ENCODE measurements at regions of chr1 and their contacts with region 1.

Region 1: DNA sequence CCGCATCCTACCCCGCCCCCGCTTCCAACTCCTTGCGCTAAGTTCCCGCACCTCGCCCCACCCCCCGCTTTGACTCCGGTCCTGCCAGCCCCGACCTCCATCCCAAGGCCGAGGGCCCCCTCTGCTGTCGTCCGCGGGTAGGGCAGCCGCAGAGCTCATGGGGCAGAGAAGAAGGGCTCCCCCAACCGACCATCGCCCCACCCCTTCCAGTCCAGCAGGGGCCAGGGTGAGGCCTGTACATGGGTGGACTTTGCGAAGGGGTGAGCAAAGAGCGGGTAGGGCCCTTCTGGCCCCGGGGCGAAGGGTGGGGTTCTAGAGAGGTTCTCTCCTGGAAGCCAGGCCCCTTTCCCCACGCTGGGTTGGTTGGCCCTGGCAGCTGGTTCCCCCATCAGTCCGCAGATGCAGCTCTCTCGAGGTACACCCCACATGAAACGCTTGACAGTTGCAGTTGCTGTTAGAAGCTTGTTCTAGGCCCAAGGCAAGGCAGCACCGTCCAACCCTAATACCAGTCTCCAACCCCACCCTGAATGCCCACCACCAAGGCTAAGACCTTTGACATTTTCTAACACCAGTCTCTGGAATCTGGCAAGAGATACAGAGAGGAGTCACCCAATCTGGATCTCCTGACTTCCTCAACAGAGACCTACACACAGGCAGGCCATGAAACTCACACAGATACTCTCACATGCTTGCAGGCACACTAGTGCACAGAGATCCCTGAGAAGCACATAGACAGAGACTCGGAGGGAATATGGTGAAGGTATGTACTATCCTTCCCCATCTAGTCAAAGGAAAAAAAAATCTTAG is 25.3 kb upstream of the ADGRB2 start:
- DNase-seq: peak; percentile 92 to 95
- H3K4me3 ChIP-seq: peak overlapping the region; percentile 54
- H3K4me3 Mint-ChIP-seq: peak overlapping the region; percentile 74
- H3K27ac Mint-ChIP-seq: peak overlapping the region; percentile 90
- H3K4me1 ChIP-seq: 0 out of 2 replicates have a peak, but pooled peaks cover 7% of the 10 kb centered on the region
- H3K4me1 Mint-ChIP-seq: no peaks in the 10 kb centered on the region
- H3K27me3 ChIP-seq: no peaks in the 10 kb centered on the region
- H3K27me3 Mint-ChIP-seq: no peaks in the 10 kb centered on the region
- CTCF ChIP-seq: peak; percentile 72 to 90

Region 2: GRCh38 chr1:31564134-31564989 is 225.1 kb before region 1 on chr1:
- CTCF ChIA-PET with region 1: no interaction called
- POLR2A ChIA-PET with region 1: no interaction called
- intact Hi-C with region 1: loop called (anchors 5 kb)
- DNase-seq: peak; percentile 63 to 76
- H3K4me3 ChIP-seq: no peak overlapping the region
- H3K4me3 Mint-ChIP-seq: no peak overlapping the region
- H3K27ac Mint-ChIP-seq: peak overlapping the region; percentile 95
- H3K4me1 ChIP-seq: peaks cover 28% of the 10 kb centered on the region
- H3K4me1 Mint-ChIP-seq: peaks cover 19% of the 10 kb centered on the region
- H3K27me3 ChIP-seq: no peaks in the 10 kb centered on the region
- H3K27me3 Mint-ChIP-seq: no peaks in the 10 kb centered on the region
- CTCF ChIP-seq: peak; percentile 51 to 62

Region 3: GRCh38 chr1:31663622-31664452 is 125.6 kb before region 1 on chr1:
- CTCF ChIA-PET with region 1: interaction called, 36 read pairs
- POLR2A ChIA-PET with region 1: no interaction called
- intact Hi-C with region 1: loop called (anchors 1 kb)
- DNase-seq: peak; percentile 44 to 73
- H3K4me3 ChIP-seq: no peak overlapping the region
- H3K4me3 Mint-ChIP-seq: no peak overlapping the region
- H3K27ac Mint-ChIP-seq: no peak overlapping the region
- H3K4me1 ChIP-seq: no peaks in the 10 kb centered on the region
- H3K4me1 Mint-ChIP-seq: no peaks in the 10 kb centered on the region
- H3K27me3 ChIP-seq: no peaks in the 10 kb centered on the region
- H3K27me3 Mint-ChIP-seq: no peaks in the 10 kb centered on the region
- CTCF ChIP-seq: peak; percentile 80 to 88

Region 4: GRCh38 chr1:31745096-31745945 is 44.1 kb before region 1 on chr1:
- CTCF ChIA-PET with region 1: interaction called, 16 read pairs
- POLR2A ChIA-PET with region 1: no interaction called
- intact Hi-C with region 1: no loop called
- DNase-seq: peak; percentile 52 to 60
- H3K4me3 ChIP-seq: no peak overlapping the region
- H3K4me3 Mint-ChIP-seq: no peak overlapping the region
- H3K27ac Mint-ChIP-seq: no peak overlapping the region
- H3K4me1 ChIP-seq: peaks cover 5% of the 10 kb centered on the region
- H3K4me1 Mint-ChIP-seq: peaks cover 14% of the 10 kb centered on the region
- H3K27me3 ChIP-seq: no peaks in the 10 kb centered on the region
- H3K27me3 Mint-ChIP-seq: no peaks in the 10 kb centered on the region
- CTCF ChIP-seq: peak; percentile 40 to 45

Region 5: GRCh38 chr1:31778763-31779488 is 10.5 kb before region 1 on chr1:
- CTCF ChIA-PET with region 1: interaction called, 10 read pairs
- POLR2A ChIA-PET with region 1: no interaction called
- intact Hi-C with region 1: no loop called
- DNase-seq: no peak
- H3K4me3 ChIP-seq: no peak overlapping the region
- H3K4me3 Mint-ChIP-seq: no peak overlapping the region
- H3K27ac Mint-ChIP-seq: no peak overlapping the region
- H3K4me1 ChIP-seq: no peaks in the 10 kb centered on the region
- H3K4me1 Mint-ChIP-seq: no peaks in the 10 kb centered on the region
- H3K27me3 ChIP-seq: no peaks in the 10 kb centered on the region
- H3K27me3 Mint-ChIP-seq: peaks cover 12% of the 10 kb centered on the region
- CTCF ChIP-seq: no peak

Region 6: GRCh38 chr1:31904339-31905092 is 115.1 kb after region 1 on chr1:
- CTCF ChIA-PET with region 1: no interaction called
- POLR2A ChIA-PET with region 1: no interaction called
- intact Hi-C with region 1: no loop called
- DNase-seq: no peak
- H3K4me3 ChIP-seq: no peak overlapping the region
- H3K4me3 Mint-ChIP-seq: no peak overlapping the region
- H3K27ac Mint-ChIP-seq: peak overlapping the region; percentile 60
- H3K4me1 ChIP-seq: no peaks in the 10 kb centered on the region
- H3K4me1 Mint-ChIP-seq: no peaks in the 10 kb centered on the region
- H3K27me3 ChIP-seq: no peaks in the 10 kb centered on the region
- H3K27me3 Mint-ChIP-seq: no peaks in the 10 kb centered on the region
- CTCF ChIP-seq: no peak